Activated naive CD4-positive, alpha-beta T cell treated with anti-CD3 and anti-CD28 coated beads for 36 hours (primary cell): ENCODE measurements at regions of chr3 and their contacts with region 1.

Region 1: GRCh38 chr3:138834359-138835212 is at the start of gene PIK3CB:
- DNase-seq: peak; percentile 89
- H3K4me3 Mint-ChIP-seq: peak within 1 kb of the TSS; percentile 98
- H3K27ac Mint-ChIP-seq: peak within 1 kb of the TSS; percentile 99
- H3K4me1 Mint-ChIP-seq: peaks cover 29% of the 10 kb centered on the region
- H3K27me3 Mint-ChIP-seq: no peaks in the 10 kb centered on the region
- total RNA-seq, gene PIK3CB: 19.2 to 20.6 TPM

Region 2: DNA sequence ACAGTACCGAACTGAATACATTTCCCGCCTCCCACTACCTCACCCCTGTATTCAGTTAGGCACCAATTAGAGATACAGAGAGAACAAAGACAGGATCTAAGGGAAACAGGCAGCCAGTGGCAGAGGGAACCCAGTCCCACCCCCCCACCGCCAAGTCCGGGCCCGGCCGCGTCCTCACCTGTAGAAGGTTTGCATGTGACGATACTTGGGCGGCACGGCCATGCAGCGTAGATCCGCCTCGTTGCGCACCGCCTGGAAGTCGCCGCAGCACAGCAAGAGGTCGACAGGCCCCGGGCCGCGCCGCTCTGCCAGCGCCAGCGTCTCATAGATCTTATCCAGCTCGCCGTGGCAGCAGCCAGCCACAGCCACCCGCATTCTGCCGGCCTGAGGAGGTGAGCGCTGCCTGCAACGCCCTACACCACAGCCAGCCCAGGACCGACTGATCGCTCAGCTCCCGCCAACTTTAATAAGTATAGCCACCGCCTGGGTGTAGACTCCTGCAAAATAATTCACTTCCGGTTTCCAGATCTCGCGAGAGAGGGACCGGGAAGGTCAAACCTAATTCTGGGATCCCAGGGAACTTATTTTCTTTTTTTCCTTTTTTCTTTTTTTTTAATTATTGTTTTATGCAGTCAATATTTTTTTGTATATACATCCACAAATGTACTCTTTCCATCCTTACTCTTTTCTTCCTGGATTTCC is 660.0 kb before region 1 on chr3 and contains the start of gene DBR1:
- CTCF ChIA-PET with region 1: no interaction called
- intact Hi-C with region 1: loop called (anchors 1 kb)
- DNase-seq: peak; percentile 89
- H3K4me3 Mint-ChIP-seq: peak within 1 kb of the TSS; percentile 97
- H3K27ac Mint-ChIP-seq: peak within 1 kb of the TSS; percentile 97
- H3K4me1 Mint-ChIP-seq: peaks cover 37% of the 10 kb centered on the region
- H3K27me3 Mint-ChIP-seq: no peaks in the 10 kb centered on the region
- total RNA-seq, gene DBR1: 20.0 to 22.3 TPM

Region 3: DNA sequence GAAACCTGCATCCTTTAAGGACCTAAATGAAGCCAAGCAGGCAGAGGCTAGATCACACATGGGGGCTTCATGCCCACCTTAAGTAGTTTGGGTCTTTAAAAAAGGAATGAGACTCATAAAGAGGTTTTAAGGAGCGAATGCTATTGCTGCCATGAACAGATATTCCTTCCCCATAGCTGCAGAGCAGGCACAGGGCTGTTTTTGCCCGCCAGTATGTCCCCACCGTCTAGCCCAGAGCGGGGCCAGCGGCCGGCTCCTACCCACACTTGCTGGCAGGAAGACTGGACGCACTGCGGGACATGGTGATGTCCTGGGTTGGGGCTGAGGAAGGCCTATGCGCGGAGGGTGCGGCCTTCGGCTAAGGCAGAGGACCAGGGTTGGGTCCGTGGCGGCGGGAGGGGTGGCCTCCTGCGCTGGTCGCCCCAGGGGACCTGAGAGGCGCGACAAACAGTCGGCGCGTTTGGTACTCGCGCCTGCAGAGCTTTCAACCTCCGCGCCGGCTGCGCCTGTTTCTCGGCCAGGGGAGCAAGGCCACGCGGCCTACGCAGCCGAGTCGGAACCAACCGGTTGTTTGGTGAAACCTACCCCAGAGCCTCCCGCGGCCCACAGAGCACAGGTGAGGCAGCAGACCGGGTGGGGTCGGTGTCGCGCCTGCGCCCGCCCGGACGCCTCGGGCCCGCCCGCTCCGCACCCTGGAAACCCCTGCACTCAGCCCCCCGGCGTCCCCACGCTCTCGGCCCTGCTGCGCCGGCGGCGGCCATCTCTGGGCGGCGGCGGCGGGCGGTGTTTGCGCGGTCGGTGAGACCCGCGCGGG is 226.1 kb before region 1 on chr3 and contains the start of gene FAIM:
- CTCF ChIA-PET with region 1: no interaction called
- intact Hi-C with region 1: loop called (anchors 1 kb)
- DNase-seq: peak; percentile 64
- H3K4me3 Mint-ChIP-seq: peak within 1 kb of the TSS; percentile 73
- H3K27ac Mint-ChIP-seq: peak within 1 kb of the TSS; percentile 79
- H3K4me1 Mint-ChIP-seq: peaks cover 10% of the 10 kb centered on the region
- H3K27me3 Mint-ChIP-seq: no peaks in the 10 kb centered on the region
- total RNA-seq, gene FAIM: 2.2 to 3.4 TPM

Region 4: GRCh38 chr3:138726946-138727730 is 107.4 kb before region 1 on chr3:
- CTCF ChIA-PET with region 1: no interaction called
- intact Hi-C with region 1: loop called (anchors 1 kb)
- DNase-seq: no peak
- H3K4me3 Mint-ChIP-seq: no peak overlapping the region
- H3K27ac Mint-ChIP-seq: peak overlapping the region; percentile 15
- H3K4me1 Mint-ChIP-seq: peaks cover 34% of the 10 kb centered on the region
- H3K27me3 Mint-ChIP-seq: no peaks in the 10 kb centered on the region

Region 5: GRCh38 chr3:139111392-139112229 is 277.0 kb after region 1 on chr3:
- CTCF ChIA-PET with region 1: no interaction called
- intact Hi-C with region 1: loop called (anchors 10 kb)
- DNase-seq: peak; percentile 80
- H3K4me3 Mint-ChIP-seq: no peak overlapping the region
- H3K27ac Mint-ChIP-seq: no peak overlapping the region
- H3K4me1 Mint-ChIP-seq: peaks cover 5% of the 10 kb centered on the region
- H3K27me3 Mint-ChIP-seq: peaks cover 7% of the 10 kb centered on the region

Region 6: DNA sequence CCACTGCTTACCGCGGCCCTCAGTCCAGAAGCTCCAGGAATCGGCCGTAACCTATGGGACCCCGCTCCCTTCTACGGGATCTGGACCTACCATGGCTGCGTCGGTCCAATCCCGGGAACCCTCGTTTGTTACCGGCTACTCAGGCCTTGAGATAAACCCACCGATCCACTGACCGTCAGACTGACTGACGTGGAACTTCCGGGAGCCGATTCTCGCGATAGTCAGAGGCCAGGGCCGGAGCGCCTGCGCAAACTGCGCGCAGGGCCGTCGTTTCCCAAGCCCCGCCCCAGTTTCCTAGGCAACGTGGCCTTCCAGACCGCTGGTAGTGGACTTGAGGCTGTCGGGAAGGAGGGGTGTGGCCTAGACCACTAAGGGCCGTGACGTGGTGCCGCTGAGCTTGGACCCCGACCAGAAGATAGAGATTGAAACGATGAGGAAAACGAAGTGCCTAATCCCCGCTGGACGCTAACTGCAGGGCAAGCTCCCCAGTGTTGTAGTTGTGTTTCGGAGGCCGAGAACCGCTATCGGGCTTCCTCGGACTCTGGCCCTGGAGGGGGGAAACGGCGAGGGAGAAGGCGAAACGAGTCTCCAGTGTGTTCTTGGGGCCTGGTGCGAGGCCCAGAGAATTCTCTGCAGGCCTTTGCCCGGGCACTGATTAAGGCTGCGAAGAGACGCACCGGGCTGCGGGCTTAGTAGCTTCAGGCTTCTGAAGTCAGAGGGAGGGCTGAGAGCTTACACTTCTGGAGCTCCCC is 555.0 kb after region 1 on chr3 and contains the start of gene COPB2:
- CTCF ChIA-PET with region 1: no interaction called
- intact Hi-C with region 1: loop called (anchors 10 kb)
- DNase-seq: peak; percentile 97
- H3K4me3 Mint-ChIP-seq: peak within 1 kb of the TSS; percentile 95
- H3K27ac Mint-ChIP-seq: peak within 1 kb of the TSS; percentile 86
- H3K4me1 Mint-ChIP-seq: peaks cover 32% of the 10 kb centered on the region
- H3K27me3 Mint-ChIP-seq: no peaks in the 10 kb centered on the region
- total RNA-seq, gene COPB2: 83.8 to 89.2 TPM